AG04449 (cell line): ENCODE measurements at regions of chr10 and their contacts with region 1.

Region 1: GRCh38 chr10:90912174-90912573 is 8.7 kb downstream of the ANKRD1 start:
- DNase-seq: no peak
- H3K4me3 ChIP-seq: no peak overlapping the region
- CTCF ChIP-seq: no peak

Region 2: DNA sequence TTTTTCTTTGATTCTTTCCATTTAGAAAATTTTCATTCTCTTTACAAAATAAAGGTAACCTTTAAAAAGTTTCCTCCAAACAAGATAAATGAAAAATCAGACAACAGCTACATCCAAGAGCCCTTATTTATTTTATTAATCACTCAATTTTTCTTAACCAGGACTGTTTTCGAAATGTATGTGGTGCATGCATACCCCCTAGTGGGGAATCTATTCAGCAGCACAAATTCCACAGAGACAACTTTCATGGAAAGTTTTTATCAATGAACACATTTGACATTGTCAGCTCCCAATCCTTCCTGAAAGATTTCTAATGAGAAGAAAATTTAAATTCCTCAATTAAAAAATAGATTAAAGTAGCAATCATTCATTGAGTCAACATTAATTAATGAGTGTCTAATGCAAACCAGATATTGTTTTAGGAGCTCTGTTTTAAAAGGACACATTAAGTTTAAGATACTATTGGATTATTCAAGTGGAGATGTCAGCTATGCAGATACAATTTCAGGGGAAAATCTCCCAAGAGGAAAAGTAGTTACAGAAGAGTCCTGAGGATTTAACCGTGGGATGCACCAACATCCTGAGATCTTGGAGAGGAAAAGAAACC is 49.2 kb before region 1 on chr10:
- CTCF ChIA-PET with region 1: no interaction called
- POLR2A ChIA-PET with region 1: no interaction called
- DNase-seq: no peak
- H3K4me3 ChIP-seq: no peak overlapping the region
- CTCF ChIP-seq: peak; percentile 60

Region 3: DNA sequence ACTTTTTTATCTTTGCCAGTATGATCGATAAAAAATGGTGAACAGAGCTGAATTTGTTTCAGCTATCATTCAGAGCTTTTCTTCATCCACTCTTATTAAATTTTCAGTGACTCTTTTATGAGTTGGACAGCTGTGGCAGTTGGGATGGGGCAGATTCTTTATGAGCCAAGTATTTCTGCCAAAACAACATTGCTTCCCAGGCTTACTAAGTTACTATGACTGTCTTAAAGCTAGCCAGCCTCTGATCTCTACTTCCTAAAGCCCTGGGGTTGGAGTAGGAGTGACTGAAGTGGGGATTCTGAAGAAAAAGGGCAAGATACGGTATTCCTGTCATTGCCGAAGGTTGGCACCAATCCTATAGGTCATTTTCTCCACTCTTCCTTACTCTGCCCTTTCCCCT is 27.8 kb before region 1 on chr10:
- CTCF ChIA-PET with region 1: interaction called, 24 read pairs
- POLR2A ChIA-PET with region 1: no interaction called
- DNase-seq: no peak
- H3K4me3 ChIP-seq: no peak overlapping the region
- CTCF ChIP-seq: no peak

Region 4: GRCh38 chr10:90930070-90930837 is 18.1 kb after region 1 on chr10:
- CTCF ChIA-PET with region 1: interaction called, 32 read pairs
- POLR2A ChIA-PET with region 1: no interaction called
- DNase-seq: peak; percentile 79
- H3K4me3 ChIP-seq: no peak overlapping the region
- CTCF ChIP-seq: no peak

Region 5: DNA sequence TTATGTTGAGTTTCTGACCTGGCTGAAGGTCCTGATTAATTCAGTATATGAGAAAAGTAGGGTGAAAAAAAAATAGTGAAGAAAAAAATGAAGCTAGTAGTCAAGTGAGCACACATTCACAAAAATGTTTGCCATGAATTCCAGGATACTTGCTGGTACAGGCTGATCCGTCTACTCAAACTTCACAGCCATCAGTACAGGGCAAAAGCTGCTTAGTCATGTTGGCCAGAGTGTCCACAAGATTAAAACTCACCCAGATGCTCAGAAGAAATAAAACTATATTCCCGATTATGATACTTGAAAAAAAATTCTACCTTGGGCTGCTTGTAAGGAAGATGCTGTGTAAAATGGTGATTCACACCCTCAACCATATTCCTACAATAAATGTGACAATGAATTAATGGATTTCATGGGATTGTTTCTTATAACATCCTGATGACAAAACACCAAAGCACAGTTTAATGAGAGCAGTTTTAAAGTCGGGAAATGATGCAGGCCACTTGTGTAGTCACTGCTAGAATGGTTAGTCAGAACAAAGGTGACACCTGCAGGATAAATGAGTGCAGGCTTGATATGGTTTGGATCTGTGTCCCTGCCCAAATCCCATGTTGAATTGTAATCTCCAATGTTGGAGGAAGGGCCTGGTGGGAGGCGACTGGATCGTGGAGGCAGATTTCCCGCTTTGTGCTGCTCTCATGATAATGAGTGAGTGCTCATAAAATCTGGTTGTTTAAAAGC is 57.9 kb after region 1 on chr10:
- CTCF ChIA-PET with region 1: interaction called, 35 read pairs
- POLR2A ChIA-PET with region 1: no interaction called
- DNase-seq: peak; percentile 59
- H3K4me3 ChIP-seq: no peak overlapping the region
- CTCF ChIP-seq: no peak

Region 6: DNA sequence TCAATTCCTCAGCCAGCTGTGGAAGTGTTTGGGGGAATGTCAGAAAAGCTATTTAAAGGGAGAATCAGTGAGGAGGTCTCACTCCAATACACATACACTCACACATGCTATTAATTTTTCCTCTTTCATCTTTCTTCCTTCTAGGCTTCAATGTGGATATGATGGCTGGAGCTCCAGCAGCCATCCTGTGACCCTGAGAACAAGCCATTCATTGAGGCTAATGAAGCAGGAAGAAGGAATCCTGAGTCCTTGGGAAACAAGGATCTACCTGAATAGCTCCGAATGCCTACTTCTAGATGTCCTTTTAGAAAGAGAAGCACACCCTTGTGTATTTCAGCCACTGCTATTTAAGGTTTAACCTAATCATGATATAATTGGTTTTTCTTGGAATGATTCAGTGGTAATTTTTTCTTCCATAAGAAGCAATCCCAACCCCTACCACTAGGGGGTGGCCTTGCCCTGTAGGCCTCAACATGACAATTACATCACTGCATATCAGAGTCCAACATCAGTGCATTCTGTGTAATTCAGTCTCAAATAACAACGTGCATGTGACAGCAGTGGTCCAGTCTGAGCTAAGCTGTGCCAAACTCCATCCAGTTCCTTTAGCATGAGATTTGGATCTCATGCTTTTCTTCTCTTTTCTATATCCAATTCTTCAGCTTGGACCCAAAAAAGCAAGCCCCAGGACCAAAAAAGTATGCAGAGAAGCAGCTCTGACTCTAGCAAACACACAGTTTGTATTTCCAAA is 94.0 kb after region 1 on chr10:
- CTCF ChIA-PET with region 1: interaction called, 28 read pairs
- POLR2A ChIA-PET with region 1: no interaction called
- DNase-seq: peak; percentile 41
- H3K4me3 ChIP-seq: no peak overlapping the region
- CTCF ChIP-seq: peak; percentile 77

Region 7: DNA sequence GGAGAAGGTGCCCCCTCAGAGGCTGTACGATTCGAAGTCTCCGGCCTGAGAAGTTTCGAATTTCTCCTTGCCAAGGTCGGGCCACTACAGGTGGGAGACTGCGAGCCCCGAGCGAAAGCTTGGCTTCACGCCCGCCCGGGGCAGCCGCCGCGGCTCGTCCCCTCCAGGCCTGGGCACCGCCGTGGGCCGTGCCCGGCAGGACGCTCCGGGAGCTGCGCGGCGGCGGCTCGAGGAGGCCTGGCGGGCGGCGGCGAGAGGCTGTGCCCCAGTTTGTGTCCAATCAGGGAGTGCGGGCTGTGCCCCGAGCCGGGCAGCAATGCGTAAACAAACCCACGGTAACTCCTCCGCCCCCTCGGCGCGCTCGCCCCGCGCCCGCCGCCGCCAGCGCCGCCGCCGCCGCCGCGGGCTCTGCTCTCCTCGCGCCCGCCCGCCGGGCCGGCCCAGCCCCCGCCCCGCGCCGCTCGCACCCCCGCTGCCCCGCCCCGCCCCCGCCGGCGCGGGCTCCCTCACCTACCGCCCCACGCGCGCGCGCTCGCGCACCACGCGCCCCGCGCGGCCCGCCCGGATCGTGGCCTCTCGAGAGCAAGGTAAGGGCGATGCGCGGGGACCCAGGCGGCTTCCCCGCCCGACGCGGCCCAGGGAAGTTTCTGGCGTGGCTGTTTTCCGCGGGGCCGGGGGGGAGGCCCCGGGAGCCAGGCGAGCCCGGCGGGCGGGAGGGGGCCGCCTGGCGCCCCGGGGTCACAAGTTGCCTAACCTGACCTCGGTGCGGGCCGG is 250.5 kb after region 1 on chr10:
- CTCF ChIA-PET with region 1: interaction called, 11 read pairs
- POLR2A ChIA-PET with region 1: interaction called, 5 read pairs
- DNase-seq: no peak
- H3K4me3 ChIP-seq: peak overlapping the region; percentile 75
- CTCF ChIP-seq: no peak

Region 8: DNA sequence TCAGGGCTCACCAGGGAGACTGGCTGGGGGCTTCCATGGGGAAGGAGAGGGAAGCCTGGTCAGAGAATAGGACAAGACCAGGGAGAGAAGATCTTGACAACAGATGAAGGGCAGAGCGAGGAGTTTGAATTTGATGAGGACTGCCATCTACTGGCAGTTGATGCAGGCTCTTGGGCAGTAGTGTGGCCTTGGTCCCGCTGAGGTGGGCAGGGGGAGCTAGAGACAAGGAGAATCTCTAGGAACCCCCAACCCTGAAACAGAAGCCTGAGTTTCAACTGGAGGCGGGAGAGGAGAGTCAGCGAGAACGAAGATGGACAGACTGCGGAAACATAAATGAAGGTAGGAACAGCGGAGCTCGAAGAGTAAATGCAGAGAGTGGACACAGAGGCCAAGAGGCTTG is 639.7 kb after region 1 on chr10:
- CTCF ChIA-PET with region 1: no interaction called
- POLR2A ChIA-PET with region 1: no interaction called
- DNase-seq: no peak
- H3K4me3 ChIP-seq: no peak overlapping the region
- CTCF ChIP-seq: peak; percentile 79